Activated naive CD4-positive, alpha-beta T cell treated with anti-CD3 and anti-CD28 coated beads for 36 hours (primary cell): ENCODE measurements at regions of chr6 and their contacts with region 1.

Region 1: GRCh38 chr6:87589693-87590549 is at the starts of genes ORC3 and RARS2:
- DNase-seq: peak; percentile 97
- H3K4me3 Mint-ChIP-seq: peak within 1 kb of the TSS; percentile 90
- H3K27ac Mint-ChIP-seq: peak within 1 kb of the TSS; percentile 83
- H3K4me1 Mint-ChIP-seq: peaks cover 60% of the 10 kb centered on the region
- H3K27me3 Mint-ChIP-seq: no peaks in the 10 kb centered on the region
- total RNA-seq, gene ORC3: 33.8 to 36.1 TPM
- total RNA-seq, gene RARS2: 15.9 to 17.4 TPM

Region 2: GRCh38 chr6:85678602-85679444 is 1911.1 kb before region 1 on chr6:
- CTCF ChIA-PET with region 1: no interaction called
- intact Hi-C with region 1: loop called (anchors 2 kb)
- DNase-seq: peak; percentile 96
- H3K4me3 Mint-ChIP-seq: peak overlapping the region; percentile 97
- H3K27ac Mint-ChIP-seq: peak overlapping the region; percentile 96
- H3K4me1 Mint-ChIP-seq: peaks cover 31% of the 10 kb centered on the region
- H3K27me3 Mint-ChIP-seq: no peaks in the 10 kb centered on the region

Region 3: DNA sequence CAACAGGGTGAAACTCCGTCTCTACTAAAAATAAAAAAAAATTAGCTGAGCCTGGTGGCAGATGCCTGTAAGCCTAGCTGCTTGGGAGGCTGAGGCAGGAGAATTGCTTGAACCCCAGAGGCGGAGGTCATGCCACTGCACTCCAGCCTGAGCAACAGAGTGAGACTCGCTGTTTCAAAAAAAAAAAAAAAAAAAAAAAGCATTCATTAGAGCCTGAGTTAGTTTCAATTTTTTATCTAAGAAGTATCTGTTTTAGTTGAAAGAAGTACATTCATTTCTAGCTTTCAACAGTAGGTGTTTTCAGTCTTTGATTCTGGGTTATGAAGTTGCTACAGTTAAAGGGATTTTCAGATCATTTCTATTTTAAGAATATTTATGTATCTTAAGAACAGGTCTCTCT is 392.4 kb before region 1 on chr6:
- CTCF ChIA-PET with region 1: no interaction called
- intact Hi-C with region 1: no loop called
- DNase-seq: peak; percentile 33
- H3K4me3 Mint-ChIP-seq: no peak overlapping the region
- H3K27ac Mint-ChIP-seq: peak overlapping the region; percentile 68
- H3K4me1 Mint-ChIP-seq: peaks cover 78% of the 10 kb centered on the region
- H3K27me3 Mint-ChIP-seq: no peaks in the 10 kb centered on the region

Region 4: DNA sequence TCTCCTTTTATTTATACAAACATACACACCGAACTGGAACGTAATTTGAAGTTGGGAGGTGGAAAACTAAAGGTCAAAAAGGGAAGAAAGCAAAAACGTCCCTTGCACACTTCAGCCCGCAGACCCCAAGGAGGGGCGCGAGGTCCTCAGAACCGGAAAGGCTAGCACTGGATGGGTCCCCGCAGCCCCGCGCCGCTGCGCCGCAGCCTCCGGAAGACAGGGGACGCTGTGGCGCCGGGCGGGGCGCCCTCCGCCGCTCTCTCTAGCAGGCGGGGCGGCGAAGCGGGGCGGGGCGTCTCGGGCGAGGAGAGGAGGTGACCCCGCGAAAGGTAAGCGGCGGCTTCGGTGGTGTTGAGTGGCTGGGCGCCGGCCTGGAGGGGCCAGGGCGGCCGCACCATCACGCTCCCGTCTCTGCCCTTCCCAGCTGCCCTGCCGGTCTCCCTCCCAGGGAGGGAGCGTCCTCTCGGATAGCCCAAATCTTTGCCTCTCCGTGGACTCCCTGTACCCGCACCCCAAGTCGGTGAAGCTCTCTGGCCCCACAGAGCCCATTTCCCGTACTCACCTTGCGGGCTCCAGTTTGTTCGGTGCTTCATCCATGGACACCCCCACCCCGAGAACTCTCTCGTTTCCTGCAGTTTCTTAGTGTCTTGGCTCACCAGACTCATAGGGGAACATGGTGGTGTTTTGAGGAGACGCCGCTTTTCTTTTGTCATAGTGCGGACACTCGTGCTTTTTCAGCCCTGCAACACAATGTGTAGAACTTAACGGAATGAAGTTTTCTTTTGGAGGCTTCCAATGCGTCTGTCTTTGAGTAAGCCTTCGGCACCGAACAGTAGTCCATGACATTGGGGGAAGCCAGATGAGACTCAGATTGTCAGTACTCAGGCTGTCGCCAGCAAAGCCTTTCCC is 267.4 kb before region 1 on chr6 and contains the start of gene SMIM8:
- CTCF ChIA-PET with region 1: no interaction called
- intact Hi-C with region 1: loop called (anchors 1 kb)
- DNase-seq: peak; percentile 86
- H3K4me3 Mint-ChIP-seq: peak within 1 kb of the TSS; percentile 98
- H3K27ac Mint-ChIP-seq: peak within 1 kb of the TSS; percentile 85
- H3K4me1 Mint-ChIP-seq: peaks cover 18% of the 10 kb centered on the region
- H3K27me3 Mint-ChIP-seq: no peaks in the 10 kb centered on the region
- total RNA-seq, gene SMIM8: 8.0 to 8.6 TPM

Region 5: DNA sequence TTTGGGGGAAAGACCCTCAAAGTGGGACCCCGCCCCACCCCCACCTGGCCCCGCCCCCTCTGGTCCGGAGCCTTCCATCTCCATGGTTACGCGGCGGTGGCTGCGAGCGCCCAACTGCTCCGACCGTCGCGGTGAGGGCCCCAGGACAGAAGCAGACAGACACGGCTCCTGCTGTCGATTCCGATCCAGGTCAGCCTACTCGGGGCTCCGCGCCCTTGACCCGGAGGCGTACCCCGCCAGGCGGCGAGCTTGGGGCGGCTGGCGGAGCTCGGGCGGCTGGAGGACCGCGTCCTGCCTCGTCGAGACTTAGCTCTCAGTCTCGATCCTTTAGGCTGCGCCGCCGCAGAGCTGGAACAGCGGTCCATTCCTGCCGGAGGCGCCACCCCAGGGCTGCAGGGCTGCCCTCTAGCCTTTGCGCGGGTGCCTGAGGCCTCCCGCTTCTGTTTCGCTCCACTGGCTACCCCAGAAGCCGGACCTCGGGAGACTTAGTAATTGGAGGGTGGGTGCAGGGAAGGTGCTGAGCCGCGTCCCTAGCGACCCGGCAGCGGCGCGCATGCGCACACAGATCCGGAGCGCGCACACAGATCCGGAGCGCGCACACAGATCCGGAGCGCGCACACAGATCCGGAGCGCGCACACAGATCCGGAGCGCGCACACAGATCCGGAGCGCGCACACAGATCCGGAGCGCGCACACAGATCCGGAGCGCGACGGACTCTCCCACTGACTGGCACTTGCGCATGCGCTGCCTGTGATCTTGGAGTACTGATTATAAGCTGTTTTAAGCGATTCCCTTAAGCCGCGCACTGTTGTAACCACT is 181.8 kb before region 1 on chr6 and contains the start of gene CFAP206:
- CTCF ChIA-PET with region 1: no interaction called
- intact Hi-C with region 1: loop called (anchors 1 kb)
- DNase-seq: peak; percentile 81
- H3K4me3 Mint-ChIP-seq: peak within 1 kb of the TSS; percentile 84
- H3K27ac Mint-ChIP-seq: no peak within 1 kb of the TSS
- H3K4me1 Mint-ChIP-seq: no peaks in the 10 kb centered on the region
- H3K27me3 Mint-ChIP-seq: peaks cover 11% of the 10 kb centered on the region
- total RNA-seq, gene CFAP206: not detected

Region 6: DNA sequence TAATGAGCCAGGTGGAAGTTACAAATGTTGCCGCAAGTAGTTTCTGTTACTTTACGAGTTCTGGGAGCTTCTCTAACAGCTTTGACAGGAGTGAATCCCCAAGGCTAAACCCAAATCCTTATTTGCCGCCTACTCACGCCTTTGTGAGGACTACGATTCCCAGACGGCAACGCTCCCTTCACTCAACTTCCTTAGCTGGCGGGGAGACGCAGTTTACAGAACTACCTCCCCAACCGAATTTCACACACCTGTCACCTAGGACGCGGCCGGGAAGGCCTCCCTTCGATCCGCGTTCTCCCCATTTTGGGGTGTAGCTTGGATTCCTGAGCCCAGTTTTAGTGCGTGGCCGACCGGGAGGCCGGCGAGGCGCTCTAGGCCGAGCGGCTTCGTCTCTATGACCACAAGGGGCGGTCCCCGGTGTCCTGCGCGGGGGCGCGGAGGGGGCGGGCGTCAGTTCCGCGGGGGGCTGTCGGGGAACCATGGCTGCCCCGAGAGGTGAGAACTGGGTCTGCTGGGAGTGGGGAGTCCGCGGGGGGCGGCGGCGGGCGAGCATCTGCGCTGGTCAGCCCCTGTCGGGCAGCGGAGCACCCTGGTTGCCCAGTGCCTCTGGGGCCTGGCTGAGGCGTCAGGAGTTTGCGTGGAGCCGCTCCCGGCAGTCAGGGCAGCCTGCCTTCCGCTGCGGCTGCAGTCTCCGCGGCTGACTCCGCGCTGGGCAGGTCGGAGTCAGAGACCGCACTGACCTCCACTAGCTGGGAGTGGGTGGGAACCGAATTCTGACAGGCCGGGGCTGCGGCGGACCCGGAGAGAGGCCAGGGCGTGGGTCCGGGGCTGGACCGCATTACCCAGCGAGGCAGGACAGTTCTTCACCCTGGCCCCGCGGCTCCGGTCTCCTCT is 117.1 kb before region 1 on chr6 and contains the start of gene SLC35A1:
- CTCF ChIA-PET with region 1: no interaction called
- intact Hi-C with region 1: loop called (anchors 1 kb)
- DNase-seq: peak; percentile 80
- H3K4me3 Mint-ChIP-seq: peak within 1 kb of the TSS; percentile 95
- H3K27ac Mint-ChIP-seq: peak within 1 kb of the TSS; percentile 92
- H3K4me1 Mint-ChIP-seq: peaks cover 15% of the 10 kb centered on the region
- H3K27me3 Mint-ChIP-seq: peaks cover 4% of the 10 kb centered on the region
- total RNA-seq, gene SLC35A1: 6.7 to 6.8 TPM

Region 7: GRCh38 chr6:87653074-87653962 is 63.4 kb after region 1 on chr6:
- CTCF ChIA-PET with region 1: no interaction called
- intact Hi-C with region 1: loop called (anchors 5 kb)
- DNase-seq: peak; percentile 30
- H3K4me3 Mint-ChIP-seq: no peak overlapping the region
- H3K27ac Mint-ChIP-seq: peak overlapping the region; percentile 69
- H3K4me1 Mint-ChIP-seq: peaks cover 20% of the 10 kb centered on the region
- H3K27me3 Mint-ChIP-seq: no peaks in the 10 kb centered on the region

Region 8: GRCh38 chr6:87742106-87742505 is 152.2 kb after region 1 on chr6:
- CTCF ChIA-PET with region 1: no interaction called
- intact Hi-C with region 1: loop called (anchors 1 kb)
- DNase-seq: peak; percentile 76
- H3K4me3 Mint-ChIP-seq: no peak overlapping the region
- H3K27ac Mint-ChIP-seq: no peak overlapping the region
- H3K4me1 Mint-ChIP-seq: peaks cover 26% of the 10 kb centered on the region
- H3K27me3 Mint-ChIP-seq: no peaks in the 10 kb centered on the region